Panc1 (cell line): ENCODE measurements at regions of chr10 and their contacts with region 1.

Region 1: GRCh38 chr10:21495752-21496342 is 29.6 kb downstream of the SKIDA1 start:
- DNase-seq: no peak
- ATAC-seq: peak; percentile 77
- H3K4me3 ChIP-seq: peak overlapping the region; percentile 69 to 73
- H3K27ac ChIP-seq: peak overlapping the region; percentile 98
- H3K4me1 ChIP-seq: peaks cover 36% of the 10 kb centered on the region
- H3K27me3 ChIP-seq: no peaks in the 10 kb centered on the region
- CTCF ChIP-seq: peak; percentile 92

Region 2: GRCh38 chr10:21281765-21282484 is 213.9 kb before region 1 on chr10:
- CTCF ChIA-PET with region 1: interaction called, 6 read pairs
- POLR2A ChIA-PET with region 1: interaction called, 3 read pairs
- in situ Hi-C with region 1: no loop called
- intact Hi-C with region 1: loop called (anchors 5 kb)
- DNase-seq: no peak
- ATAC-seq: peak; percentile 52; the same call in 1 of the 2 replicates
- H3K4me3 ChIP-seq: no peak overlapping the region
- H3K27ac ChIP-seq: peak overlapping the region; percentile 96
- H3K4me1 ChIP-seq: peaks cover 55% of the 10 kb centered on the region
- H3K27me3 ChIP-seq: no peaks in the 10 kb centered on the region
- CTCF ChIP-seq: no peak

Region 3: GRCh38 chr10:21364196-21365114 is 131.4 kb before region 1 on chr10:
- CTCF ChIA-PET with region 1: no interaction called
- POLR2A ChIA-PET with region 1: no interaction called
- in situ Hi-C with region 1: no loop called
- intact Hi-C with region 1: loop called (anchors 10 kb)
- DNase-seq: peak; percentile 62
- ATAC-seq: peak; percentile 97
- H3K4me3 ChIP-seq: no peak overlapping the region
- H3K27ac ChIP-seq: peak overlapping the region; percentile 99
- H3K4me1 ChIP-seq: peaks cover 32% of the 10 kb centered on the region
- H3K27me3 ChIP-seq: no peaks in the 10 kb centered on the region
- CTCF ChIP-seq: no peak

Region 4: DNA sequence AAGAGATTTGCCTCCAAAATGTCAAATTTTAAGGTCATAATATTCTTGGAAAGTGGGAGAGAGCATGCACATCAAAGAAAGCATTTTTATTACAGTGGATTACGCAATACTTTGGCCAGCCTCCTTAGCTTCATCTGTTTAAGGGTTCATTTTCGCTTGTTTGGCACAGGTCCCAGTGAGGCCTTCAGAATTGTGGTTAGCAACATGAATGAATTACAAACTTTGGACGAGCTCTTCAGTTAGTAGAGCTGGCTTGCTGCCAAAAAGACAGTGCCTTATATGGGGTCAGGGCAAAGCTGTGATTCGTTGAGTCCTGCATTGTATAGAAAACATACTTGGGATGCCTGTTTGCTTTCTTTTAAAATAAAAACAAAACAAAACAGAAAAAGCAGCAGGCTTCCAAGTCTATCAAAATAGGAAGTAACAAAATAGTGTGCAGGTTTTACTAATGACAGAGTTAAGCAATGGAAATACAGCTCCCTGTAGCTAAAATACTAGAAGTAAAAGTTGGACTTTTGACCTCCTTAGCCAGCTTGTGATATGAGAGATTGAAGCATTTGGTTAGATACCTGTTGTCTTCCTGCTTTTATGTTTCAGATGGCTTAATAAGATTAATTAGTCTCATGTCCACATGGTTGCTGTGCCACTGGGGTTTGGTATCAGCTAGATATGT is 229.0 kb after region 1 on chr10:
- CTCF ChIA-PET with region 1: no interaction called
- POLR2A ChIA-PET with region 1: no interaction called
- in situ Hi-C with region 1: no loop called
- intact Hi-C with region 1: no loop called
- DNase-seq: peak; percentile 28
- ATAC-seq: peak; percentile 79
- H3K4me3 ChIP-seq: no peak overlapping the region
- H3K27ac ChIP-seq: peak overlapping the region; percentile 64
- H3K4me1 ChIP-seq: peaks cover 73% of the 10 kb centered on the region
- H3K27me3 ChIP-seq: no peaks in the 10 kb centered on the region
- CTCF ChIP-seq: no peak

Region 5: GRCh38 chr10:21953585-21954057 is 457.8 kb after region 1 on chr10:
- CTCF ChIA-PET with region 1: no interaction called
- POLR2A ChIA-PET with region 1: no interaction called
- in situ Hi-C with region 1: no loop called
- intact Hi-C with region 1: loop called (anchors 10 kb)
- DNase-seq: no peak
- ATAC-seq: no peak
- H3K4me3 ChIP-seq: no peak overlapping the region
- H3K27ac ChIP-seq: no peak overlapping the region
- H3K4me1 ChIP-seq: no peaks in the 10 kb centered on the region; the same call in 1 of the 2 replicates
- H3K27me3 ChIP-seq: no peaks in the 10 kb centered on the region
- CTCF ChIP-seq: peak; percentile 52; the same call in 1 of the 2 replicates